ENCODE measurements at regions of chr15 and their contacts with region 1.

Region 1: DNA sequence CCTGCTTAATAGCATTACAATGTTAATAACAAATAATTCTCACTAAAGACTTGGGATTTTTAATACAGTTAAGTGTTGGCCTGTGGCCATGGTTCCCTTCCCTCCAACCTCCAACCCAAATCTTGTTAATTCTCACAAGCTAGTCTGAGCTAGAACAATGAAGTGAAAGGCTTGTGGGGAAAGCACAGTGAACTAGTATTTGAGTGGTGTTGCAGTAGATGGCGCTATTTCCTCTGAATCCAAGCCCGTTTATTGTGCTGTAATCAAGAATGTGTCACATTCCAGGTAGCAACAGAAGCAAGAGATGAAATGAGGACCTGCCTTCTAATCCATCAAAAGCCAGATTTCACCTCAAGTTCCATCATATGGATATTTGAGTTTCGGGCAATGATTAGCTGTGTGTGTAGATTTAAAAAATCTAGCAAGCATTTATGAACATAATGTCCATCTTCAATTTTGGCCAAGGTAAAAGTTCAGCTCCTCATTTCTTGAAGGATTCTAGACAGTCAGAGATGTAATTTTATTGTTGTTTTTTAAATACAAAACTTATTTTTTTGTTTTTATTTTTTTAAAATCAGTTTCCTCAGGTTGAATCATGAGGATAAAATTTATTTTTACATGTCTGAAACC is 160.7 kb downstream of the SQOR start:
- DNase-seq: peak; percentile 65
- H3K4me3 ChIP-seq: no peak overlapping the region
- H3K27ac ChIP-seq: no peak overlapping the region
- H3K4me1 ChIP-seq: peaks cover 19% of the 10 kb centered on the region
- CTCF ChIP-seq: peak; percentile 90

Region 2: GRCh38 chr15:45611305-45611704 is 184.2 kb before region 1 on chr15:
- CTCF ChIA-PET with region 1: no interaction called
- POLR2A ChIA-PET with region 1: no interaction called
- intact Hi-C with region 1: no loop called
- DNase-seq: peak; percentile 59
- H3K4me3 ChIP-seq: no peak overlapping the region
- H3K27ac ChIP-seq: no peak overlapping the region
- H3K4me1 ChIP-seq: peaks cover 17% of the 10 kb centered on the region
- CTCF ChIP-seq: peak; percentile 86

Region 3: GRCh38 chr15:46091860-46092450 is 296.4 kb after region 1 on chr15:
- CTCF ChIA-PET with region 1: no interaction called
- POLR2A ChIA-PET with region 1: no interaction called
- intact Hi-C with region 1: loop called (anchors 5 kb)
- DNase-seq: peak; percentile 40
- H3K4me3 ChIP-seq: no peak overlapping the region
- H3K27ac ChIP-seq: no peak overlapping the region
- H3K4me1 ChIP-seq: no peaks in the 10 kb centered on the region
- CTCF ChIP-seq: peak; percentile 88

Region 4: DNA sequence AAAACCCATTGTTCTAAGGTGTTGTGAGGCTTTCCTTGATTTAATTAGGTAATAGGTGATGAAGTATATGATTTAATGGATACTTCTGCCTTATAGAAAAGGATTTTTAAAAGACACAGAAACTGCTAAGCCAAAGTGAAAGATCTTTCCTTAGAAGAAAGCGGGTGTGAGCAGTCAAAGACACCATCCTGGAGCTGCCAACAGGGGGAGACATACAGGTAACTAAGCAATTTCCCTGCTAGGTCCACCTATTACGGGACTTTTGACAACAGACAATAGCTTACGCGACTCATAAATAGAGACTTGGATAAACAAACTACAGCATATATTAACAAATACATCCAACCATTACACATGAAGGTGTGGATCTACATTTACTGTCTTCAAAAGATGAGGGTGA is 508.8 kb after region 1 on chr15:
- CTCF ChIA-PET with region 1: no interaction called
- POLR2A ChIA-PET with region 1: no interaction called
- intact Hi-C with region 1: loop called (anchors 10 kb)
- DNase-seq: peak; percentile 58
- H3K4me3 ChIP-seq: no peak overlapping the region
- H3K27ac ChIP-seq: no peak overlapping the region
- H3K4me1 ChIP-seq: no peaks in the 10 kb centered on the region
- CTCF ChIP-seq: peak; percentile 88

Region 5: GRCh38 chr15:46848704-46849103 is 1053.1 kb after region 1 on chr15:
- CTCF ChIA-PET with region 1: no interaction called
- POLR2A ChIA-PET with region 1: no interaction called
- intact Hi-C with region 1: no loop called
- DNase-seq: no peak
- H3K4me3 ChIP-seq: no peak overlapping the region
- H3K27ac ChIP-seq: no peak overlapping the region
- H3K4me1 ChIP-seq: no peaks in the 10 kb centered on the region
- CTCF ChIP-seq: no peak